ENCODE measurements at regions of chr14 and their contacts with region 1.

Region 1: GRCh38 chr14:25400607-25401206 is 350.8 kb upstream of the STXBP6 start:
- DNase-seq: peak; percentile 46 to 52
- H3K4me3 ChIP-seq: no peak overlapping the region
- H3K4me3 Mint-ChIP-seq: no peak overlapping the region
- H3K27ac Mint-ChIP-seq: no peak overlapping the region
- H3K4me1 ChIP-seq: no peaks in the 10 kb centered on the region
- H3K4me1 Mint-ChIP-seq: no peaks in the 10 kb centered on the region
- H3K27me3 ChIP-seq: no peaks in the 10 kb centered on the region
- H3K27me3 Mint-ChIP-seq: peaks cover 6% of the 10 kb centered on the region
- CTCF ChIP-seq: peak; percentile 66 to 70

Region 2: DNA sequence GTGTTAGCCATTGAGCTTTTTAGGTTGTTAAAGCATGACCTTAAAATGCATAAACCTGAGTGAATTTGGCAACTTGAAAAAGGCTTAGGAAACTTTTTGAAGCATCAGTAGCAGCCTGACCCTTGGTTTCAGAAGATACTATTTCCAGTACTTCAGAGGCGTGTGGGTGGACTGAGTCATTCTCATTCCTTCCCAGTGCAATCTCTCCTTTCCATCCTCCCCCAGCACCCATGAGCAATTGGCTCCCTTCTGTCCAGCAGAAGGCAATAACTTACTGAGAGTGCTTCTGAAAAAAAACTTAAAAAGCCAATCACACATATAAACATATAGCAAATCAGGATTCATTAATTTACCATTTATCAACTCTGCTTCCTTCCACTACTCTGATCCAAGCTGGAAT is 51.4 kb before region 1 on chr14:
- CTCF ChIA-PET with region 1: no interaction called
- POLR2A ChIA-PET with region 1: no interaction called
- intact Hi-C with region 1: loop called (anchors 5 kb)
- DNase-seq: no peak
- H3K4me3 ChIP-seq: no peak overlapping the region
- H3K4me3 Mint-ChIP-seq: no peak overlapping the region
- H3K27ac Mint-ChIP-seq: no peak overlapping the region
- H3K4me1 ChIP-seq: no peaks in the 10 kb centered on the region
- H3K4me1 Mint-ChIP-seq: no peaks in the 10 kb centered on the region
- H3K27me3 ChIP-seq: no peaks in the 10 kb centered on the region
- H3K27me3 Mint-ChIP-seq: peaks cover 3% of the 10 kb centered on the region
- CTCF ChIP-seq: no peak